Activated CD4-positive, alpha-beta T cell treated with anti-CD3 and anti-CD28 coated beads for 36 hours (primary cell): ENCODE measurements at regions of chr1 and their contacts with region 1.

Region 1: GRCh38 chr1:110412576-110412975 is 5.1 kb upstream of the LAMTOR5 start:
- DNase-seq: peak; percentile 78
- ATAC-seq: peak; percentile 50
- H3K4me3 Mint-ChIP-seq: no peak overlapping the region
- H3K27ac Mint-ChIP-seq: no peak overlapping the region
- H3K4me1 Mint-ChIP-seq: peaks cover 11% of the 10 kb centered on the region
- H3K27me3 Mint-ChIP-seq: no peaks in the 10 kb centered on the region

Region 2: GRCh38 chr1:110218739-110219138 is 193.8 kb before region 1 on chr1:
- CTCF ChIA-PET with region 1: no interaction called
- POLR2A ChIA-PET with region 1: no interaction called
- intact Hi-C with region 1: no loop called
- DNase-seq: no peak
- ATAC-seq: no peak
- H3K4me3 Mint-ChIP-seq: no peak overlapping the region
- H3K27ac Mint-ChIP-seq: no peak overlapping the region
- H3K4me1 Mint-ChIP-seq: peaks cover 43% of the 10 kb centered on the region
- H3K27me3 Mint-ChIP-seq: no peaks in the 10 kb centered on the region

Region 3: DNA sequence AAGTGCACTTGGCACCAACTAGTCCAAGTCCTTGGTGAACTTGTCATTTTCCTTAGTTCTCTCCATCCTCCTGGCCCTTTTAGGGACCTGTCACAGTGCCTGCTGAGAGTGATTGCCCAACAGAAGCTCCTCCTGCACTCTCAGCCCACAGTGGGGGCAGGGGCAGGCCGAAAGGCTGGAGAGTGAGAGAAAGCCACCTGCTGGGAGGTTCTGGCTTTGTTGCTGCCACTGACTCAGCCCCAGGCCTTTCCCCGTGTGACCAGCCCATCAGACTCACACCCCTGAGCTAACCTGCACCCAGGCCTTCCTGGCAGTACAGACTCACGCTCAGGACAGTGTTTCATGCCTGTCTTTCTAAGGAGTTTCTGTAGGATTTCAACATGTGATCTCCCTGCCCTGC is 21.2 kb after region 1 on chr1:
- CTCF ChIA-PET with region 1: interaction called, 20 read pairs
- POLR2A ChIA-PET with region 1: no interaction called
- intact Hi-C with region 1: no loop called
- DNase-seq: peak; percentile 7
- ATAC-seq: no peak
- H3K4me3 Mint-ChIP-seq: no peak overlapping the region
- H3K27ac Mint-ChIP-seq: no peak overlapping the region
- H3K4me1 Mint-ChIP-seq: no peaks in the 10 kb centered on the region
- H3K27me3 Mint-ChIP-seq: peaks cover 3% of the 10 kb centered on the region

Region 4: GRCh38 chr1:111006541-111006940 is 594.0 kb after region 1 on chr1:
- CTCF ChIA-PET with region 1: no interaction called
- POLR2A ChIA-PET with region 1: no interaction called
- intact Hi-C with region 1: no loop called
- DNase-seq: no peak
- ATAC-seq: no peak
- H3K4me3 Mint-ChIP-seq: no peak overlapping the region
- H3K27ac Mint-ChIP-seq: no peak overlapping the region
- H3K4me1 Mint-ChIP-seq: no peaks in the 10 kb centered on the region
- H3K27me3 Mint-ChIP-seq: peaks cover 40% of the 10 kb centered on the region